PC-9 (cell line): ENCODE measurements at regions of chr5 and their contacts with region 1.

Region 1: GRCh38 chr5:90474235-90475109 is at the starts of genes MBLAC2 and POLR3G:
- DNase-seq: peak; percentile 75 to 90
- H3K4me3 ChIP-seq: peak within 1 kb of the TSS; percentile 75
- H3K27ac ChIP-seq: peak within 1 kb of the TSS; percentile 51
- H3K4me1 ChIP-seq: peaks cover 16% of the 10 kb centered on the region
- H3K27me3 ChIP-seq: no peaks in the 10 kb centered on the region
- CTCF ChIP-seq: peak; percentile 49; the same call in 1 of the 2 replicates
- total RNA-seq, gene MBLAC2: 4.3 and 4.6 TPM in 2 replicates
- total RNA-seq, gene POLR3G: 3.9 and 4.4 TPM in 2 replicates

Region 2: GRCh38 chr5:90409318-90410177 is 64.9 kb before region 1 on chr5 and contains the start of gene CETN3:
- CTCF ChIA-PET with region 1: no interaction called
- POLR2A ChIA-PET with region 1: no interaction called
- intact Hi-C with region 1: loop called (anchors 1 kb)
- DNase-seq: peak; percentile 90 to 92
- H3K4me3 ChIP-seq: peak within 1 kb of the TSS; percentile 92
- H3K27ac ChIP-seq: peak within 1 kb of the TSS; percentile 82
- H3K4me1 ChIP-seq: peaks cover 29% of the 10 kb centered on the region; the same call in 1 of the 2 replicates
- H3K27me3 ChIP-seq: no peaks in the 10 kb centered on the region
- CTCF ChIP-seq: no peak
- total RNA-seq, gene CETN3: 29.3 and 35.6 TPM in 2 replicates

Region 3: DNA sequence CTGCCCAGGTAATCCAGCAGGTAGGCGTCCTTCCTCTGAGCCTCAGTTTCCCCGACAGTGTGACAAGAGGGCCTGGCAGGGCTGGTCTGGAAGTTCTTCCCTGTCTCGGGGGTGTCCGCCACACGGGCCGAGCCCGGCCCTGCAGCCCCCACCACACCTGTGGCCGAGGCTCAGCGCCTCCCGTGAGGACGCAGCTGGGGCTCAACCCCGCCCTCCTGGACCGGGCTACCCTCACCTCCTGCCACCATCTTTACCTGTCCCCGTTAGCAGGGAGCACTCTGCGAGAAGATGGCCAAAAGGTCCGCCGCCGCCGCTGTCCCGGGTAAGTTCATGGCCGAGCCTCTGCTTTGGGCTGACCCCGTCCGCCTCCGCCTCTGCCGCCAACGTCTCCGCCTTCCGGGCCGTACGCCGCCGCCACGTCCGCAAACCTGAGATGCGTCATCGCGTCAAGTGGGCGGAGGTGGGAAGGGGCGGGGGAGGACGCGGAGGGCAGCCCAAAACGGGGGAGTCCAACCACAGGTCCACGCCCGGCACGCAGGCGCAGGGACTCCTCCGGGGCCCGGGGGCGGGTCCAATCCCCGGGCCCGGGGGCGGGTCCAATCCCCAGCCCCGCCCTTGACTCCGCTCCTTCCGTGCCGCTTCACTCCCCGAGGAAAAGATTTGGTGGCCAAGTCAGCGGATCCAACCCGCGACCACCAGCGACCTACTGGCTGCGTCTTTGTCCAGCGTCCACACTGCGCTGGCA is 54.9 kb after region 1 on chr5 and contains the start of gene LYSMD3:
- CTCF ChIA-PET with region 1: no interaction called
- POLR2A ChIA-PET with region 1: no interaction called
- intact Hi-C with region 1: loop called (anchors 1 kb)
- DNase-seq: peak; percentile 91 to 95
- H3K4me3 ChIP-seq: peak within 1 kb of the TSS; percentile 82
- H3K27ac ChIP-seq: peak within 1 kb of the TSS; percentile 54
- H3K4me1 ChIP-seq: peaks cover 15% of the 10 kb centered on the region
- H3K27me3 ChIP-seq: peaks cover 4% of the 10 kb centered on the region; the same call in 1 of the 2 replicates
- CTCF ChIP-seq: no peak
- total RNA-seq, gene LYSMD3: 4.6 and 10.6 TPM in 2 replicates

Region 4: DNA sequence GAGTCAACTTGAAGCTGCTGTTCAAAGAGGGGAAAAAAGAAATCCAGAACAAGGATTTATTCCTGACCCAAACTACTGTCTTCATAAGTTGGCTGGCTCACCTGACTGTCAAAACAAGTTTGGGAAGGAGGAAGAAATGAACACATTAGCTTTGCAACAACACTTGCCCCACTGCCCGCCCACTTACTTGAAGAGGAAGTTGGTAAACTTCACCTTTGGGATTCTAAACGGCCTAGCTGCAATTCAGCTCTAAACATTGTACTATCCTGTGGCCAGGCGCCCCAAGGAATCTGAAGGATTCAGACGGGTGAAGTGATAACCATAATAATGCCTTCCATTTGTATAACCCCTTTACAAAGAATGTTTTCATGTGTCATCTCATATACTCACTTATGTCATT is 709.3 kb after region 1 on chr5:
- CTCF ChIA-PET with region 1: no interaction called
- POLR2A ChIA-PET with region 1: no interaction called
- intact Hi-C with region 1: no loop called
- DNase-seq: no peak
- H3K4me3 ChIP-seq: no peak overlapping the region
- H3K27ac ChIP-seq: no peak overlapping the region
- H3K4me1 ChIP-seq: peaks cover 6% of the 10 kb centered on the region; the same call in 1 of the 2 replicates
- H3K27me3 ChIP-seq: no peaks in the 10 kb centered on the region
- CTCF ChIP-seq: no peak